Tibial artery (tissue), 4 donors: ENCODE measurements at regions of chr20 and their contacts with region 1.

Region 1: DNA sequence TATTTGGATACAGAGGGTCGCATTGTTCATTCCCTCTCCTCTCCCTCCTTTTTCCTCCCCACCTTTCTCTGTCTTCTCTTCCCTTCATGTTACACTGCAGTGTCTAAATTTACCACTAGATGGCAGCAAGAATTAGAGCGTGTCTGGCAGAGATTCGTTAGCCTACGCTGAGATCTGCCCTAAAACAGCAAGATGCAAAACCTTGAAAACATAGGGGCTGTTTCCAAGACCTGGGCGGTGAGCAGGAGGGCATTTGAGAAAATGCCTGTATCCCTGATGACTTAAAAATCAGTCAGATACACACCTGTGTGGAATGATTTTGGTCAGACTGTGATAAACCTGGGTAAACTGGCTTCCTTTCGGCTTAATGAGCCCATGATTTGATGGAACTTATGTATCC is 101.5 kb upstream of the ISM1 start:
- DNase-seq: no peak
- H3K4me3 ChIP-seq: no peak overlapping the region
- H3K27ac ChIP-seq: no peak overlapping the region
- H3K4me1 ChIP-seq: no peaks in the 10 kb centered on the region
- H3K27me3 ChIP-seq: no peaks in the 10 kb centered on the region
- CTCF ChIP-seq: peak; percentile 82 to 84

Region 2: GRCh38 chr20:13221673-13222318 is 102.2 kb after region 1 on chr20:
- intact Hi-C with region 1: loop called (anchors 10 kb)
- DNase-seq: peak; percentile 40 to 72
- H3K4me3 ChIP-seq: peak overlapping the region; percentile 59 to 64
- H3K27ac ChIP-seq: peak overlapping the region in 1 of 2 donors; percentile 18
- H3K4me1 ChIP-seq: peaks cover 0 to 31% (median 23%) of the 10 kb centered on the region in 4 donors
- H3K27me3 ChIP-seq: peaks cover 0 to 30% of the 10 kb centered on the region in 2 donors
- CTCF ChIP-seq: peak; percentile 5 to 11

Region 3: GRCh38 chr20:13492001-13492481 is 372.5 kb after region 1 on chr20:
- intact Hi-C with region 1: no loop called
- DNase-seq: peak in 1 of 2 donors; percentile 34
- H3K4me3 ChIP-seq: no peak overlapping the region
- H3K27ac ChIP-seq: peak overlapping the region; percentile 56 to 65
- H3K4me1 ChIP-seq: peaks cover 0 to 69% (median 29%) of the 10 kb centered on the region in 4 donors
- H3K27me3 ChIP-seq: no peaks in the 10 kb centered on the region
- CTCF ChIP-seq: peak in 1 of 2 experiments; percentile 41

Region 4: DNA sequence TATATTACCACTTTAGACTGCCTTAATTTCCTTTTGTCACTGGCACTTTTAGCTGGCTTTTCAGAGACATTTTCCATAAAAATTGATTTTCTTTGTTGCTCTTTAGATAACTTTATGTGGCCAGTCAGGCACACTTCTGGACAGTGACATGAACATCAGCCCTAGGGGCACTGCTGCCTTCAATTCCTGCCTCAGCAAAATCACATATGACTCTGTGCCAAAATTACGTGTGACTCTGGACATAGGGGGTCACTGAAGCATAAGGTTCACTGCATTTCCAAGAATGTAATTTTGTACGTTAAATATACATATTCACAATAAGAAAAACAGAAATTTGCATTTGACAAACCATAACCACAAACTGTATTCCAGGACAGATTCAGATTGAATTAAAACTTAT is 598.6 kb after region 1 on chr20:
- intact Hi-C with region 1: no loop called
- DNase-seq: no peak
- H3K4me3 ChIP-seq: no peak overlapping the region
- H3K27ac ChIP-seq: no peak overlapping the region
- H3K4me1 ChIP-seq: peaks cover 0 to 9% (median 2%) of the 10 kb centered on the region in 4 donors
- H3K27me3 ChIP-seq: no peaks in the 10 kb centered on the region
- CTCF ChIP-seq: no peak

Region 5: GRCh38 chr20:13771853-13772453 is 652.4 kb after region 1 on chr20:
- intact Hi-C with region 1: loop called (anchors 2 kb)
- DNase-seq: no peak
- H3K4me3 ChIP-seq: no peak overlapping the region
- H3K27ac ChIP-seq: peak overlapping the region in 1 of 2 donors; percentile 14
- H3K4me1 ChIP-seq: no peaks in the 10 kb centered on the region
- H3K27me3 ChIP-seq: no peaks in the 10 kb centered on the region
- CTCF ChIP-seq: peak; percentile 36 to 45